ENCODE measurements at regions of chr11 and their contacts with region 1.

Region 1: DNA sequence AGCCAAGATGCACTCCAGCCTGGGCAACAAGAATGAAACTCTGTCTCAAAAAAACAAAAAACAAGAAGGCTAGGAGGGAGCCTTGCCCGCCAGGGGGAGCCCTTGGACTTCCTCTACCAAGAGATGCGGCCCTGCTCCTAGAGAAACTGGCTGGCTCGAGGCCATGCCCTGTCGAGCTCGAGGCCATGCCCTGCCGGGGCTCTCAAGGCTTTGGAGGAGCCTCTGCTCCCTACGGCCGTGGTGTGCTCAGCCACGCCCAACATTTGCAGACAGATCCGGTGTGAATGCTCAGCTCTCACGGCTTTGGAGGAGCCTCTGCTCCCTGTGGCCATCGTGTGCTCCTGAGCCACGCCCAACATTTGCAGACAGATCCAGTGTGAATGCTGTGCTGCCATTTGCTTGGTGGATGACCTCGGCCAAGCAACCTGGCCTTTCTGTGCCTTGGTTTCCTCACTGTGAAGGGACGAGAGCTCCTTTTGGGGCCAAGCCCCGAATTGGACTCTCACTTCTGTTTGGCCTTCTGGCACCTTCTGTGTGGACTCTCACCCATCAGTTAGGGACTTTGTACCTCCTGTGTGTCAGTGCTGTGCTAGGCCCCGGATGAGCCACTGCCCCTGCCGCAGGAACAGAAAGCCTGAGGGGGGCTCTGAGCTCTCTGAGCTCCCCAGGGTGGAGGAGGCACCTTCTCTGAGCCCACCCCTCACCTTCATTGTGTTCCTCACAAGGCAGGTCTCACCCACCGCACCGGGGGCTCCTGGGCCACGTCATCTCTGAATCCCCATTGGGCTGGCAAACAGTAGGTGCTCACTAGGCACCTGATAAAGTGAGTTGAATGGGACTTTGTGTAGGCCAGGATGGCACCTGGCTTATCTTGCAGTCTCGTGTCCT is 14.1 kb downstream of the C11orf24 start:
- DNase-seq: peak; percentile 93
- H3K4me3 Mint-ChIP-seq: no peak overlapping the region
- H3K27ac Mint-ChIP-seq: no peak overlapping the region
- H3K4me1 Mint-ChIP-seq: no peaks in the 10 kb centered on the region
- H3K27me3 Mint-ChIP-seq: no peaks in the 10 kb centered on the region
- CTCF ChIP-seq: peak; percentile 88

Region 2: GRCh38 chr11:68383976-68384501 is 126.3 kb after region 1 on chr11:
- CTCF ChIA-PET with region 1: interaction called, 9 read pairs
- POLR2A ChIA-PET with region 1: no interaction called
- intact Hi-C with region 1: loop called (anchors 1 kb)
- DNase-seq: peak; percentile 54
- H3K4me3 Mint-ChIP-seq: no peak overlapping the region
- H3K27ac Mint-ChIP-seq: no peak overlapping the region
- H3K4me1 Mint-ChIP-seq: no peaks in the 10 kb centered on the region
- H3K27me3 Mint-ChIP-seq: no peaks in the 10 kb centered on the region
- CTCF ChIP-seq: peak; percentile 93

Region 3: GRCh38 chr11:68447015-68447801 is 189.5 kb after region 1 on chr11:
- CTCF ChIA-PET with region 1: interaction called, 6 read pairs
- POLR2A ChIA-PET with region 1: no interaction called
- intact Hi-C with region 1: loop called (anchors 1 kb)
- DNase-seq: peak; percentile 67
- H3K4me3 Mint-ChIP-seq: no peak overlapping the region
- H3K27ac Mint-ChIP-seq: no peak overlapping the region
- H3K4me1 Mint-ChIP-seq: no peaks in the 10 kb centered on the region
- H3K27me3 Mint-ChIP-seq: no peaks in the 10 kb centered on the region
- CTCF ChIP-seq: peak; percentile 95

Measured in MCF 10A (cell line).